GM10248 (cell line): ENCODE measurements at regions of chr1 and their contacts with region 1.

Region 1: DNA sequence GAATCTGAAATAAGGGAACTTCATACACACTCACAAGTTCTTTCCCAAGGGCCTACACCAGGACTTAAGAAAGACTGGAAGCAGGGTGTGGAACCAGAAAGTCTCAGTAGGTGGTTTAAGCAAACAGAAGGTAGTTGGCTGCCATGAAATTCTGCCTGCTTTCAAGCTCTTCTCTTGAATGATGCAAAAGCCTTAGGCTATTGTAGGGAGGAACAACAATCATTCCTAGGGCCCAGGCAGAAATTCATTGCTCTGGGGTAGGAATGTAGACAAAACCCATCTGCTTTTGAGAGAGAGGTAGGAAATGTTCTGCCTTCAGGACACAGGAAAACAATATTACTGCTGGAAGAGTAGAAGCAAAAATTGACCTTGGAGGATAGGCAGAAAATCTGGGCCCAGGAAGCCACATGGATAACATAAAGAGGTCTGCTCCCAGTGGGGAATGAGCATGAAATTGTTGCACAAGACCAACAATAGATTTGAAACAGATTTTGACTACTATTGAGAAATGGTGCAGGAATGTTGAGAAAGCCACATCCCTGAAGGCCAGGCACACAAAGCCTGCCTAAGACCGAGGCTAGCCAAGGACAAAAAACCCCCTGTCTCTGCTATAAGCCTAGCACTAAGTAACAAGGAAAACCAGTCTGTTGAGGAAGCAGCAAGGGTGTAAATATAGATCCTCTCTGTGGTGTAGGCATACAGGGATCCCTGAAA is 22.7 kb upstream of the SFT2D2 start:
- DNase-seq: no peak
- CTCF ChIP-seq: no peak

Region 2: DNA sequence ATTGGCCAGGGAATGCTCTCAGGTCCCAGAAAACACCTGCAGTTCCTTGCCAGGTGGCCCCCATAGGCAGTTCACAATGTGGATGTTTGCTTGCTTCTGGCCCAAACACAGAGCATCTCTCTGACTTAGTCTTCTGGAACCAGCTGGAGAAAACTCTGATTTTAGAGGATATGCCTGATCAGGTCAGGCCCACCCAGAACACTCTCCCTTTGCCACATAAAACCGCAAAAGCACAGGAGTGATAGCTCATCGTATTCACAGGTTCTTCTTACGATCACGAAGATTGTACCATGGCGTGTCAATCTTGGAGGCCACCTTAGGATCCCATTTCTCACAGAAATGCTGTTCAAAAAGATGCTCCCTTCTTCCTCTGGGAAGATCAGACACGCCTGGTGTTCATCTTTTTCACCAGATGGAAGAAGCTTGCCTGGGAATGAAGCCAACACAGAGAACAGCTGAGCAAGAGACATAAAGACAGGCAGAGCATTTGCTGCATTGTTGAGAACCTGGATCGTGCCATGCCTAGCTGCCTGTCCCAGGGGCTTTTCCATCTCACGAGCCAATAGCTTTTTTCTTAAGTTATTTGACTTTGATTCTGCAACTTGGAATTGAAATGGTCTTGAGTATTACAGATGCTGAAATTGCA is 673.1 kb before region 1 on chr1:
- CTCF ChIA-PET with region 1: no interaction called
- POLR2A ChIA-PET with region 1: no interaction called
- DNase-seq: no peak
- CTCF ChIP-seq: no peak

Region 3: DNA sequence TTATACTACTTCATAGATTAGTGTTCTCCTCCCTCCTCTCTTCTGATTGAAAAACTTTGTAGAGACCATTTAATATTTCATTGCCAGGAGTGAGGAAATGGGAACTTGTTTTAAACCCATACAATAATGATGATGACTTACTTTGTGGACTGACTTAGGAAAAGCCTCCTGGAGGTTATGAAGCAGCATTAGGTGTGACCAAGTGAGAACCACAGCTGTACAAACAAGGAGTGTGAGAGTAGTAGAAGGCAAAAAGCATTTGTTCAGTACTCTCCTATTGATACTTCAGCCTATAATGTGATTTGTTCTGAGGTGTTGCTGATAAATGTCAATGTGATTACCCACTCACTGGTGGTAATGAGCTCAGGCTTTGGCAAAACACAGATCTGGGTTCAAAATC is 15.9 kb before region 1 on chr1:
- CTCF ChIA-PET with region 1: interaction called, 11 read pairs
- POLR2A ChIA-PET with region 1: no interaction called
- DNase-seq: no peak
- CTCF ChIP-seq: no peak